Caco-2 (cell line): ENCODE measurements at regions of chr13 and their contacts with region 1.

Region 1: DNA sequence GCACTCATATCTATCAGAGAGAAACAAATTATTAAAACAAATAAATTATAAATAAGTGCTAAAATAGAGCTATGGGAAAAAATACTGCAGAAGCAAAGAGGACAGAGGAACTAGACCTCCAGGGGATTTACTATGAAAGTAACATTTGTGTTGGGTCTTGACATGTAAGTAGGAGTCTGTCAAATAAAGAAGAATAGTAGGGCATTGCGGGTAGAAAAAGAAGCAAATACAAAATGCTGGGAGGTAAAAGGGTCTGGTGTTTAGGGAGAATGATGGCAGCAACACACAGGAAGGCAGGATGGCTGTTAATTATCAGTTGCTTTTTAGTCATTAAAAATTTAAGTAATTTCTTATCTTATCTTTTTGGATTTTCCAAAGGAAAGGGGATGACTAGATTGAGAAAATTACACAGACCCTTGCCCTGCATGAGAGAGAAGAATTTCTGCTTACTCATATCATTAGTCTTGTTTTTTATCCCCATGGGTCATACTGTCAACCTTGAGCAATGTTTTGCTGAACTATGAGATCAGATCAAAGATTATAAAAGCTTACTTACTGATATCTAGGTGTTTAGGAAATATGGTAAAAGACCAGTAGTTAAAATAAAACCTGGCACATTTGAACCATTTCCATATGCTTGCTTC is 472.7 kb downstream of the DIAPH3 start:
- DNase-seq: peak in 1 of 2 experiments; percentile 70
- H3K4me3 ChIP-seq: no peak overlapping the region
- H3K4me3 Mint-ChIP-seq: peak overlapping the region; percentile 29
- H3K27ac Mint-ChIP-seq: peak overlapping the region; percentile 54
- H3K4me1 ChIP-seq: peaks cover 94% of the 10 kb centered on the region
- H3K4me1 Mint-ChIP-seq: peaks cover 45% of the 10 kb centered on the region
- H3K27me3 ChIP-seq: no peaks in the 10 kb centered on the region
- H3K27me3 Mint-ChIP-seq: no peaks in the 10 kb centered on the region
- CTCF ChIP-seq: no peak

Region 2: GRCh38 chr13:58830841-58831240 is 860.1 kb before region 1 on chr13:
- CTCF ChIA-PET with region 1: no interaction called
- POLR2A ChIA-PET with region 1: no interaction called
- intact Hi-C with region 1: no loop called
- DNase-seq: no peak
- H3K4me3 ChIP-seq: no peak overlapping the region
- H3K4me3 Mint-ChIP-seq: no peak overlapping the region
- H3K27ac Mint-ChIP-seq: no peak overlapping the region
- H3K4me1 ChIP-seq: no peaks in the 10 kb centered on the region
- H3K4me1 Mint-ChIP-seq: no peaks in the 10 kb centered on the region
- H3K27me3 ChIP-seq: no peaks in the 10 kb centered on the region
- H3K27me3 Mint-ChIP-seq: no peaks in the 10 kb centered on the region
- CTCF ChIP-seq: no peak

Region 3: DNA sequence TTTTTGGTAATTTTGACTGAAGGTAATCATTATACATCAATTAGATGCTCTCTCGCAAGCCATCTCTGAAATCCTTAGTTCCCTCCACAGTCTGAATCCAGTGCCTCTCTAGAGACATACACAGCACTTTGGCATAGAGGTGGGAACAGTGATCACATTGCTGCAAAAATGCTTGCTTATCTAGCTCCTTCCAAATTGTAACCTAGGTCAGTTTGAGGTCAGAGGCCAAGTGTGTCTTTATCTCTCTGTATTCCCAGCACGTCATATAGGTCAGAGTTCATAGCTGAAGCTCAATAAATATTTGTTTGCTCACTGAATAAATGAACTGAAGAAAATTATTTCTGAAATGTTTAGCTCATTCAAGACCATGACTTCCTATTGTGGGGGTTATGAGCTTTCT is 10.3 kb after region 1 on chr13:
- CTCF ChIA-PET with region 1: no interaction called
- POLR2A ChIA-PET with region 1: no interaction called
- intact Hi-C with region 1: loop called (anchors 1 kb)
- DNase-seq: peak; percentile 31 to 47
- H3K4me3 ChIP-seq: no peak overlapping the region
- H3K4me3 Mint-ChIP-seq: peak overlapping the region; percentile 46
- H3K27ac Mint-ChIP-seq: peak overlapping the region; percentile 31
- H3K4me1 ChIP-seq: peaks cover 66% of the 10 kb centered on the region
- H3K4me1 Mint-ChIP-seq: peaks cover 48% of the 10 kb centered on the region
- H3K27me3 ChIP-seq: no peaks in the 10 kb centered on the region
- H3K27me3 Mint-ChIP-seq: no peaks in the 10 kb centered on the region
- CTCF ChIP-seq: no peak

Region 4: DNA sequence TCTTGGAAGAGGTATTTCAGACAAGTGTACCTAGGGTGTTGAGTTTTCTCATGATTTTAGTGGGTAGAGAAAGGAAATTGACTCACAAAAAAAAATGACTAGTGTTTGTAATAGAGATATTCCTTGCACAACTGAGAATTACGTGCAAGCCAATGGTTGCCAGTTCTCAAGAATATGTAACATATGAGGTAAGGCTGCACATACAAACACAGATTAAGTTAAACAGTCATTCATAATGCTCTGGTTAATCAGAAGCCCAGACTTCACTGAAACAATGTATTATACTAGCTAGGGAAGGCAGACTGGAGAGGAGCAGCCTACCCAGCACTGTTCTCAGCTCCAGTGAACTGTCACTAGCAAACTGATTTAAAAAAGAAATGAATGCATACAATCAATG is 54.4 kb after region 1 on chr13:
- CTCF ChIA-PET with region 1: no interaction called
- POLR2A ChIA-PET with region 1: no interaction called
- intact Hi-C with region 1: loop called (anchors 2 kb)
- DNase-seq: no peak
- H3K4me3 ChIP-seq: no peak overlapping the region
- H3K4me3 Mint-ChIP-seq: no peak overlapping the region
- H3K27ac Mint-ChIP-seq: peak overlapping the region; percentile 32
- H3K4me1 ChIP-seq: peaks cover 30% of the 10 kb centered on the region
- H3K4me1 Mint-ChIP-seq: peaks cover 19% of the 10 kb centered on the region
- H3K27me3 ChIP-seq: no peaks in the 10 kb centered on the region
- H3K27me3 Mint-ChIP-seq: no peaks in the 10 kb centered on the region
- CTCF ChIP-seq: no peak

Region 5: DNA sequence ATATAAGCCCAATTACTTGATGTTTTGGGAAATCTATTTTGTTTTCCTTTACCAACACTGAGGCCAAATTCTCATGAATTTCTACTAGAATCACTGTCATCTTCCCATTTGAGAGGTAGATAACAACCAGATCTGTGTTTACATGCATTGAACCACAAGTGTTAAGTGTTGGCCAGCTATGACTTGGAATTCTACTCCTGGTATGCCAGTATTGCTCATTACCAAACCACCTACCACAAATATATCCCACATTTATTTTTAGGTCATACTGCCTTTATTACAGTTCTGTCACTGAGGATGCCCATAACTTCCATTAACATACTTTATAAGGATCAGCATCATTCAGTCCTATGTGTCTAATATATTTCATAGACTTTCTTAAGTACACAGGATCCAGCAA is 143.8 kb after region 1 on chr13:
- CTCF ChIA-PET with region 1: no interaction called
- POLR2A ChIA-PET with region 1: no interaction called
- intact Hi-C with region 1: loop called (anchors 1 kb)
- DNase-seq: no peak
- H3K4me3 ChIP-seq: no peak overlapping the region
- H3K4me3 Mint-ChIP-seq: peak overlapping the region; percentile 46
- H3K27ac Mint-ChIP-seq: peak overlapping the region; percentile 97
- H3K4me1 ChIP-seq: peaks cover 59% of the 10 kb centered on the region
- H3K4me1 Mint-ChIP-seq: peaks cover 28% of the 10 kb centered on the region
- H3K27me3 ChIP-seq: no peaks in the 10 kb centered on the region
- H3K27me3 Mint-ChIP-seq: no peaks in the 10 kb centered on the region
- CTCF ChIP-seq: no peak

Region 6: GRCh38 chr13:60267498-60268198 is 576.7 kb after region 1 on chr13:
- CTCF ChIA-PET with region 1: no interaction called
- POLR2A ChIA-PET with region 1: no interaction called
- intact Hi-C with region 1: loop called (anchors 2 kb)
- DNase-seq: peak; percentile 78 to 81
- H3K4me3 ChIP-seq: peak overlapping the region; percentile 55
- H3K4me3 Mint-ChIP-seq: no peak overlapping the region
- H3K27ac Mint-ChIP-seq: no peak overlapping the region
- H3K4me1 ChIP-seq: peaks cover 39% of the 10 kb centered on the region
- H3K4me1 Mint-ChIP-seq: peaks cover 9% of the 10 kb centered on the region
- H3K27me3 ChIP-seq: no peaks in the 10 kb centered on the region
- H3K27me3 Mint-ChIP-seq: no peaks in the 10 kb centered on the region
- CTCF ChIP-seq: no peak

Region 7: DNA sequence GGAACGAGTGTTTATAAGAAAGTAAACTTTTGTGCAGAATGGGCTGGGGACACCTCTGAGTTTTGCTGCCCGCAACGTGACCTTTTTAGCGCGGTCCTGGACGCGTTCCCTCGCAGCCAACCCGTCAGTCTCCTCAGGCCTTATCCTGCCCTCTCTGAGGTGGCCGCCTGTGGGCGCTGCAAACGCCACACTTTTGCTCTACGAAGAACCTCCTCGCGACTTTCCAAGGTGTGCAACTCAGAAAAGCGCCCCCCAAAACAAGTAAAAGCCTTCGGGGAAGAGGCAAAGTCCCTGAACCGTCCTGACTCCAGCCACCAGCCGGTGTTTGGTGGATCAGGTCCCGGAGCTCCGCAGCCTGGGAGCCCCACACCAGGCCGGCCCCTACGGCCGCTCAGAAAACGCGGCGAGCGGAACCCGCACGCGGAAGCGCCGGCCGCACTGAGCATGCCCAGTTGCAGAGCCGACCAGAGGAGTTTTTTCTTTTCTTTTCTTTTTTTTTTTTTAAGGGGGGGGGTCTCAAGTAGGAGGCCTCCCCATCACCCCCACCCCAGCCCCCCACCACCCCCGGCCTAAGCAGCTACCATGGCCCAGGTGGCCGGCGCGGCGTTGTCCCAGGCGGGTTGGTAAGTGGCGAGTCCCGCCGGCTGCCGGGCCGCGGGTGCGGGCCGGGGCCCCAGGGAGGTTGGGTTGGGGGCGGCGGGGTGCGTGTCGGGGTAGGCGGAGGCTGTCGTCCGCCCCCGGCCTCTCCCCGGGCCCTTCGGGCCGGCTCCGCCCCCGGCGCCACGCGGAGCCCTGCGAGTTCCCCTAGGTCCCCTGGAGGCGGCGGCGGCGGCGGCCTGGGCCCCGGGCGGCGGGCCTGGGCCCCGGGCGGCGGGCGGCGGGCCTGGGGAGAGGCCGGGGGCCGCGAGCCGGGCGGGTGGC is 706.1 kb after region 1 on chr13 and contains the start of gene TDRD3:
- CTCF ChIA-PET with region 1: no interaction called
- POLR2A ChIA-PET with region 1: no interaction called
- intact Hi-C with region 1: loop called (anchors 10 kb)
- DNase-seq: peak; percentile 90 to 91
- H3K4me3 ChIP-seq: peak within 1 kb of the TSS; percentile 58
- H3K4me3 Mint-ChIP-seq: peak within 1 kb of the TSS; percentile 91
- H3K27ac Mint-ChIP-seq: peak within 1 kb of the TSS; percentile 85
- H3K4me1 ChIP-seq: peaks cover 25% of the 10 kb centered on the region
- H3K4me1 Mint-ChIP-seq: peaks cover 43% of the 10 kb centered on the region
- H3K27me3 ChIP-seq: no peaks in the 10 kb centered on the region
- H3K27me3 Mint-ChIP-seq: no peaks in the 10 kb centered on the region
- CTCF ChIP-seq: peak; percentile 83 to 94
- total RNA-seq, gene TDRD3: 16.3 and 17.2 TPM in 2 replicates